K562 (cell line): ENCODE measurements at regions of chr21 and their contacts with region 1.

Region 1: GRCh38 chr21:44892536-44893277 is 19.2 kb upstream of the PTTG1IP start:
- DNase-seq: peak; percentile 78 to 81 (median 81)
- ATAC-seq: peak; percentile 88
- H3K4me3 ChIP-seq: no peak overlapping the region
- H3K27ac ChIP-seq: no peak overlapping the region
- H3K4me1 ChIP-seq: peaks cover 4 to 74% of the 10 kb centered on the region in 2 experiments
- H3K27me3 ChIP-seq: peaks cover 32 to 87% of the 10 kb centered on the region in 2 experiments; a peak in 4 of 5 replicates
- CTCF ChIP-seq: peak; percentile 87 to 98 (median 87)
- EP300 ChIP-seq: no peak
- POLR2A ChIP-seq: no peak
- RAD21 ChIP-seq: peak; percentile 54 to 75

Region 2: DNA sequence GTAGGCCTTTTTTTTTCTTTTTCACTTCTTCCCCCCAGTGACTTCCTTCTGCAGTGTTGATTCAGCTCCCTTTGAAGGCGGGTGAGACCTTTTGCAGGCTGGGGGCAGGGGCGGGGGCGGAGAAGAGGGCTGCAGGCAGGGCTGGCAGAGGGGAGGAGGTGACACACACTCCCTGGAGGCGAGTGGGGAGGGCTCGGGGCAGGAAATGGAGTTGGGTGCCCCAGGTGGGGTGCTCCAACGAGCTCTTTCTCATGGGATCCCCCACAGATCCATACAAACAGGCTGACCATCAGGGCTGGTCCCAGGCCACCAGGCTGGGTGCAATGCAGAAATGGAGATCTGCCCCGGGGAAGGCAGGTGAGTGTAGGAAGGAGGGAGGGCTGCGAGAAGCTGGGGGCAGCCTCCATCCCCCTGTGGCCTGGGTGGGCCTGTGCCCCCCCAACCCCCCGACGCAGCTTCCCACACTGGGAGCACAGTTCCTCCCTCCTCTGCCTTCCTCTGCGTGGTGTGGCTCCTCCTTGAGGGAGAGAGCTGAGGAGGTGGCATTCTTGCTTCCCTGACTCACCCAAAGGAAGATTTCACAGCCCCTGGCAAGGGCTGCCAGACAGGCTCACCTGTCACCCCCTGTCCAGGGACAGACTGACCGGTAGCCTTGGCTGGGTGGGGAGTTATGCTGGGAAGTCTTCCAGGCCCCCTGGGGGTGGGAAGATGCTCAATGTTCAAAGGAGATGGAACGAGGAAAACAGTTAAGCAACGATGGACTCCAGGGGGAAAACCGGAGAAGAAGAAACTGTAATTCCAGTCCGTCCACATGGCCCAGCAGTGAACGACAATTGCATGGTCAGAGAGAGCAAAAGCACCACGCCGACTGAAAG is 35.1 kb after region 1 on chr21:
- CTCF ChIA-PET with region 1: no interaction called
- POLR2A ChIA-PET with region 1: no interaction called
- in situ Hi-C with region 1: no loop called
- intact Hi-C with region 1: loop called (anchors 2 kb)
- DNase-seq: peak; percentile 58 to 72 (median 63)
- ATAC-seq: peak; percentile 31; the same call in 2 of the 3 replicates
- H3K4me3 ChIP-seq: no peak overlapping the region
- H3K27ac ChIP-seq: no peak overlapping the region
- H3K4me1 ChIP-seq: peaks cover 8 to 34% of the 10 kb centered on the region in 2 experiments; a peak in 4 of 5 replicates
- H3K27me3 ChIP-seq: peaks cover 31 to 53% of the 10 kb centered on the region in 2 experiments
- CTCF ChIP-seq: no peak
- EP300 ChIP-seq: no peak
- POLR2A ChIP-seq: no peak
- RAD21 ChIP-seq: no peak

Region 3: DNA sequence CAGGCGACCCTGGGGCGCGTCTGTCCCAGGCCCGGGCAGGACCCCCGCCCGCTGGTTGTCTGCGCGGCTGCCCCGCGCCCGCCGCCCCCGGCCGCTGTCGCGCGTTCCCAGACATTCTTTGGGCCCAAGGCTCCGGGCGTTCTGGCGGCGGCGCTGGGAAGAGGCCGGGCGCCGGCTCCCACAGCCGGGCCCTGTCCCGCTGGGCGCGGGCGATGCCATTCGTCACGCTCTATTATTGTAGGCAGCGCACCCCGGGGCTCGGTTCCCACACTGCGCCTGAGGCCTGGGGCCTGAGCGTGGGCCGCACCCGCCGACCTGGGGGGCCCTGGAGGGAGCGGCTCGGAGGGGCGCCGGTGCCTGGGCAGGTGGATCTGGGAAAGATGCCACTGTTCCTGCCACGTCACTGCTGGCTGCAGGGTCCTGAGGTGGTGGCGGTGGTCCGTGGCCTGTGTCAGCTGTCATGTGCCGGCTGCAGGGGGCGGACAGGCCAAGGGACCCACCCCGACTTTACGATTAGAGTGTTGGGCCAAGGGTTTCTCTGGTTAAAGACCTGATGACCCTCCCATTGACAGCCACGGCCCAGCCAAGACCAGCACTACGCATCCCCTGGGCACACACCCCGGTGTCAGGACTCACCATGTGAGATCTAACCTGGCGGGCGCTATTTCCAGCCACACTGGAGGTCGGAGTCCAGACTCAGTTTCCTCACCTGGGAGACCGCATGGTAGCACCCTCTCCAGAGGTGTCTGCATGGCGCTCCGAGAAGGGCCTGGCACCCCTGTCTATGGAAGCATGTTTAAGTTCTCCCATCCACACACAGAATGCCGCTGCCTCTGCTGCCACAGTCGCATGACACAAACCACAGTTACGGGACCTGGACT is 126.6 kb after region 1 on chr21:
- CTCF ChIA-PET with region 1: no interaction called
- POLR2A ChIA-PET with region 1: no interaction called
- in situ Hi-C with region 1: no loop called
- intact Hi-C with region 1: no loop called
- DNase-seq: no peak
- ATAC-seq: no peak
- H3K4me3 ChIP-seq: no peak overlapping the region
- H3K27ac ChIP-seq: no peak overlapping the region
- H3K4me1 ChIP-seq: peaks cover 0 to 42% of the 10 kb centered on the region in 2 experiments; a peak in 2 of 5 replicates
- H3K27me3 ChIP-seq: peaks cover 41 to 79% of the 10 kb centered on the region in 2 experiments; a peak in 4 of 5 replicates
- CTCF ChIP-seq: no peak
- EP300 ChIP-seq: no peak
- POLR2A ChIP-seq: no peak
- RAD21 ChIP-seq: no peak

Region 4: DNA sequence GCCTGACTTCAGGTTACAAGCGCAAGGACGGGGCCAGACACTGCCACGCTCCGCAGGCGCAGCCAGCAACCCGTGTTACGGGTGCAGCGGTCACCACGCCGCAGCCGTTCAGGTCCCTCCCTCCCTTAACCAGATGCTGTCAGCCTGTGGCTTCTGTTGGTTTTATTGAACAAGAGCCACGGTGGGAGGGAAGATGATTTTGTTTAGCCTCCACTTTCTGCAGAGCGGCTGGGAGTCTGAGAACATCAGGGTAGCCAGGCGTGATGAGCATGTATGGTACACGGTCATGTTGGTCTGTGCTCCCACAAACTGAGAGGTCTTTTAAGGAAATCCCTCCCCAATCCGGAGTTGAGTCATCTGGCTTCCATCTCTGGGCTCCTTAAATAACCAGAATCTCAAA is 163.2 kb after region 1 on chr21:
- CTCF ChIA-PET with region 1: no interaction called
- POLR2A ChIA-PET with region 1: no interaction called
- in situ Hi-C with region 1: no loop called
- intact Hi-C with region 1: no loop called
- DNase-seq: no peak
- ATAC-seq: no peak
- H3K4me3 ChIP-seq: no peak overlapping the region
- H3K27ac ChIP-seq: no peak overlapping the region
- H3K4me1 ChIP-seq: peaks cover 0 to 6% of the 10 kb centered on the region in 2 experiments; a peak in 1 of 5 replicates
- H3K27me3 ChIP-seq: peaks cover 60 to 81% of the 10 kb centered on the region in 2 experiments
- CTCF ChIP-seq: no peak
- EP300 ChIP-seq: no peak
- POLR2A ChIP-seq: no peak
- RAD21 ChIP-seq: no peak

Region 5: DNA sequence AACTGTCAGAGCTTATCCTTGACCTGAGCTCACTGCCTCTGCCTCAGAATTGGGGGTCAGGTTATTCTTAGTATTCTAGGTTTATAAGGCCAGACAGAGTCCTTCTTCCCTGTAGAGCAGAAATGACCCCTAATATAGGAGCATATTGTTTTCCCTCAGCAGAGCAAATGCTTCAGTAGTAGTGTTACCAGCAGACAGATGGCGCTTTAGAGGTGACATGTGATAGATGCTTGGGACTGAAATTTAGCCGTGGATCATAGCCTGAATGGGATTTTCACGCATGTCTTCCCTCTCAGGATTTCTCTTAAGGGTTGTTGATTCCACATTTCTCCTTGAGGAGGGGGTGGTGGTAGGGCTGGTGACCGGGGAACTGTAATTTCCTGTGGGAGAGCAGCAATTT is 206.2 kb after region 1 on chr21:
- CTCF ChIA-PET with region 1: no interaction called
- POLR2A ChIA-PET with region 1: no interaction called
- in situ Hi-C with region 1: no loop called
- intact Hi-C with region 1: no loop called
- DNase-seq: peak; percentile 46 to 51 (median 46)
- ATAC-seq: peak; percentile 82
- H3K4me3 ChIP-seq: no peak overlapping the region
- H3K27ac ChIP-seq: no peak overlapping the region
- H3K4me1 ChIP-seq: peaks cover 6 to 13% of the 10 kb centered on the region in 2 experiments
- H3K27me3 ChIP-seq: peaks cover 0 to 4% of the 10 kb centered on the region in 2 experiments; a peak in 2 of 5 replicates
- CTCF ChIP-seq: peak; percentile 65 to 68 (median 67)
- EP300 ChIP-seq: no peak
- POLR2A ChIP-seq: no peak
- RAD21 ChIP-seq: peak; percentile 6 to 59; a peak in 2 of 4 replicates